Posterior vena cava (tissue), 2 donors: ENCODE measurements at regions of chr1 and their contacts with region 1.

Region 1: GRCh38 chr1:150053926-150054325 is 13.7 kb upstream of the VPS45 start:
- DNase-seq: no peak

Region 2: DNA sequence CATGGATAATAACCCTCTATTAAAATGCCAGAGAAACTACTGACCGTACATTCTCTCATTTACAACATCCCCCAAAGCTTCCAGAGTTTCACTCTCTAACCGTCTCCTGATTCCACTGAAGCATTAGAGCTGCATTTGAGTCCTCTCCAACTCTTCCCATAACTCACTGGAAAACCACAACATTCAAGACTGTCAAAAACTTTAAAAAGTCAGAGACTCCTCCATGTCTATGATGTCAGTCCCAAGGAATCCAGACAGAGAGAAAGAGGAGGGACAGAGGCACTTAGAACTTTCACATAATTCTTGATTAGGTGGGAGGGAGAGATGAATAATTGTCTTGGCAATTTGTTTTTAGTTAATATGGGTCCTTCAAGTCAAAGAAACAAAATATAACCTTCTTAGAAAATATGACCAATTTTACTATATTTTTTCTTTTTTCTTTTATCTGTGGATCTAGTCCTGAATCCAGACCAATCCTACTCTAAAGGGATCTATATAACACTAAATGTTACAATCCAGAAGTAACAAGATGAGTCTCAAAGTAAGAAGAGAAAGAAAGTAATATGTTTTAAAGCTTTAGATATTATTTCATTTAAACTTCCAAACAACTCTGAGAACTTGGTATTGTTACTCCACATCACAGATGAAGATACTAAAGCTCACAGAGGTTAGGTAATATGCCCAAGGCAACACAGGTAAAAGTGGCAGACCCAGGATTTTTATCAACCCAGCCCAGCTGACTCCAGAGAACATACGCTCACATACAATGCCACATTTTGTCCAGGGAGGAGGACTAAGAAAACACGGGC is 67.2 kb before region 1 on chr1:
- intact Hi-C with region 1: loop called in 1 of 2 experiments (anchors 2 kb)
- DNase-seq: no peak